CD8-positive, alpha-beta memory T cell (primary cell): ENCODE measurements at regions of chr5 and their contacts with region 1.

Region 1: DNA sequence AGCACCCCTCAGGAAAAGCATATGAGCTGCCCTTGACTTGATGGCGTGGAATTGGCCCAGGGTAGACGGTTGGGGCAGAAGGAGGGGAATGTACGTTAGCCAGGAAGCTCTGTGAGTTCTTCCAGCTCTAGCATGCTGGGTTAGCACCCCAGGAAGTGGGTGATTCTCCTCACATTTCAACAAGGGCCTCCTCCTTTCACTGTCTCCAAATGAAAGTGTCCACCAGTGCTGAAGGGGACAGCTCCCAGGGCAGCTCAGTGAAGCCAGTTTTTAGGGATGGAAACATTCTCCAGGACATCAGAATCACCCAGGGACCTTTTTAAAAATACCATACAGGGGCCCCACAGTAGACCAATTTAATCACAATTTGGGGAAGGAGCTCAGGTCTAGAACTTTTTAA is 17.2 kb upstream of the AFAP1L1 start:
- DNase-seq: no peak
- H3K4me3 ChIP-seq: no peak overlapping the region
- H3K4me3 Mint-ChIP-seq: no peak overlapping the region
- H3K27ac ChIP-seq: no peak overlapping the region
- H3K27ac Mint-ChIP-seq: no peak overlapping the region
- H3K4me1 ChIP-seq: no peaks in the 10 kb centered on the region
- H3K4me1 Mint-ChIP-seq: no peaks in the 10 kb centered on the region
- H3K27me3 ChIP-seq: no peaks in the 10 kb centered on the region
- H3K27me3 Mint-ChIP-seq: peaks cover 9 to 40% of the 10 kb centered on the region in 2 donors

Region 2: DNA sequence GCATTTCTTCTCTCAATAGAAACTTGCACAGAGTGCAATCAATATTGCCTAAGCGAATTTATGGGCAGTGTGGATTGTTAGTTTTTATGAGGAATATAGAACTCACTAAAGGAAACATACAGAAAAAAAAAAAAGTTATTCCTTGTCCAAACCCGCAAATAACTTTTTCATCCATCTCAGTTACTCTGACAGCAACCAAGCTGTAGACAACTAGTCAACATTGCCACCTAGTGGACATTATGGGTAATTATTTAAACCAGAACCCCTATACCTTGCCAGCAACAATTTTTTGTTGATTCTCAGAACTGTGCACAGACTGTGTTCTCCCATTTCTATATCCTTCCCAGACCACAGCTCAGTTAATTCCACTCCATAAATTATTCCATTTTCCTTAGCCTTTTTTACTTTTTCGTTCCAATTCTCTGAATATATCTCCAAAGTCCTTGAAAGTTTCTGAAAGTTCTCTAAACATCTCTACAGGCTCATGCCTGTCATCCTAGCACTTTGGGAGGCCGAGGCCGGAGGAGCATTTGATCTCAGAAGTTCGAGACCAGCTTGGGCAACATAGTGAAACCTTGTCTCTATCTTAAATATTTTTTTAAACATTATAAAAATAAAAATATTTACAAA is 14.5 kb after region 1 on chr5:
- CTCF ChIA-PET with region 1: interaction called, 10 read pairs
- POLR2A ChIA-PET with region 1: no interaction called
- DNase-seq: peak in 2 of 5 donors; percentile 23 to 58
- H3K4me3 ChIP-seq: no peak overlapping the region
- H3K4me3 Mint-ChIP-seq: no peak overlapping the region
- H3K27ac ChIP-seq: no peak overlapping the region
- H3K27ac Mint-ChIP-seq: no peak overlapping the region
- H3K4me1 ChIP-seq: no peaks in the 10 kb centered on the region
- H3K4me1 Mint-ChIP-seq: peaks cover 10 to 16% (median 12%) of the 10 kb centered on the region in 3 donors
- H3K27me3 ChIP-seq: peaks cover 5% of the 10 kb centered on the region
- H3K27me3 Mint-ChIP-seq: peaks cover 49 to 51% of the 10 kb centered on the region in 2 donors

Region 3: GRCh38 chr5:149345147-149345875 is 90.8 kb after region 1 on chr5 and contains the start of gene GRPEL2:
- CTCF ChIA-PET with region 1: no interaction called
- POLR2A ChIA-PET with region 1: no interaction called
- DNase-seq: peak; percentile 73 to 90 (median 81)
- H3K4me3 ChIP-seq: peak within 1 kb of the TSS; percentile 96
- H3K4me3 Mint-ChIP-seq: peak within 1 kb of the TSS; percentile 81 to 95 (median 95)
- H3K27ac ChIP-seq: peak within 1 kb of the TSS; percentile 78
- H3K27ac Mint-ChIP-seq: peak within 1 kb of the TSS; percentile 72 to 93 (median 90)
- H3K4me1 ChIP-seq: peaks cover 52% of the 10 kb centered on the region
- H3K4me1 Mint-ChIP-seq: peaks cover 49 to 62% (median 60%) of the 10 kb centered on the region in 3 donors
- H3K27me3 ChIP-seq: no peaks in the 10 kb centered on the region
- H3K27me3 Mint-ChIP-seq: no peaks in the 10 kb centered on the region
- total RNA-seq, gene GRPEL2: 33.4 to 36.5 TPM

Region 4: GRCh38 chr5:149551200-149552037 is 296.9 kb after region 1 on chr5 and contains the start of gene CSNK1A1:
- CTCF ChIA-PET with region 1: no interaction called
- POLR2A ChIA-PET with region 1: no interaction called
- DNase-seq: peak; percentile 98 to 99 (median 99)
- H3K4me3 ChIP-seq: peak within 1 kb of the TSS; percentile 95
- H3K4me3 Mint-ChIP-seq: peak within 1 kb of the TSS; percentile 95 to 99 (median 99)
- H3K27ac ChIP-seq: peak within 1 kb of the TSS; percentile 93
- H3K27ac Mint-ChIP-seq: peak within 1 kb of the TSS; percentile 95 to 100 (median 99)
- H3K4me1 ChIP-seq: peaks cover 28% of the 10 kb centered on the region
- H3K4me1 Mint-ChIP-seq: peaks cover 31 to 42% (median 38%) of the 10 kb centered on the region in 3 donors
- H3K27me3 ChIP-seq: no peaks in the 10 kb centered on the region
- H3K27me3 Mint-ChIP-seq: peaks cover 0 to 2% of the 10 kb centered on the region in 2 donors
- total RNA-seq, gene CSNK1A1: 177 to 187 TPM